Calu3 (cell line): ENCODE measurements at regions of chr3 and their contacts with region 1.

Region 1: GRCh38 chr3:58052373-58053273 is 44.4 kb downstream of the FLNB start:
- DNase-seq: peak; percentile 77
- H3K4me3 Mint-ChIP-seq: peak overlapping the region; percentile 36
- H3K27ac Mint-ChIP-seq: peak overlapping the region; percentile 99
- H3K4me1 Mint-ChIP-seq: peaks cover 61% of the 10 kb centered on the region
- H3K27me3 Mint-ChIP-seq: no peaks in the 10 kb centered on the region
- CTCF ChIP-seq: no peak

Region 2: DNA sequence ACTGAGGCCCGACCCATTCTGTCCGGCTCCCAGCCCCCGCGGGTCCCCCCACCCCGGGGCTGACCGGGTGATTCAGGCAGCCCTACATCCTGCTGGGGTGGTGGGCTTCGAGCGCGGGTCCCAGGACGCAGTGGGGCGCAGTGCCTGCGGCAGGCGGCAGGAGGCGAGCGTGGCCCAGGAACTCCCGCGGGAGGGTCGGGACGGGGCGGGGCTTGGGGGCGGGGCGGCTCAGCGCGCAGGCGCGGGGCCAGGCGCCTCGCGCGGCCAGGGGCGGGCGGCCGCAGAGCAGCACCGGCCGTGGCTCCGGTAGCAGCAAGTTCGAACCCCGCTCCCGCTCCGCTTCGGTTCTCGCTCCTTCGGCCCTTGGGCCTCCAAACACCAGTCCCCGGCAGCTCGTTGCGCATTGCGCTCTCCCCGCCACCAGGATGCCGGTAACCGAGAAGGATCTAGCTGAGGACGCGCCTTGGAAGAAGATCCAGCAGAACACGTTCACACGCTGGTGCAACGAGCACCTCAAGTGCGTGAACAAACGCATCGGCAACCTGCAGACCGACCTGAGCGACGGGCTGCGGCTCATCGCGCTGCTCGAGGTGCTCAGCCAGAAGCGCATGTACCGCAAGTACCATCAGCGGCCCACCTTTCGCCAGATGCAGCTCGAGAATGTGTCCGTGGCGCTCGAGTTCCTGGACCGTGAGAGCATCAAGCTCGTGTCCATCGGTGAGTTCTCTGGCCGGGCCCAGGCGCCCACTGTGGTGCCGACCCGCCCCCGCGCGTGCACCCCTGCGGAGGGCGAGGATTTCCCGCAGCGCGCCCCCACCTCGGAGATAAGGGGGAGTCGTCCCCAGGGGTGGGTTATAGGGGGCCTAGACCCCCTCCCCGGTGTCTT is 44.2 kb before region 1 on chr3 and contains the start of gene FLNB:
- CTCF ChIA-PET with region 1: interaction called, 11 read pairs
- intact Hi-C with region 1: loop called (anchors 1 kb)
- DNase-seq: peak; percentile 80
- H3K4me3 Mint-ChIP-seq: peak within 1 kb of the TSS; percentile 77
- H3K27ac Mint-ChIP-seq: peak within 1 kb of the TSS; percentile 33
- H3K4me1 Mint-ChIP-seq: peaks cover 36% of the 10 kb centered on the region
- H3K27me3 Mint-ChIP-seq: no peaks in the 10 kb centered on the region
- CTCF ChIP-seq: peak; percentile 50
- total RNA-seq, gene FLNB: 136 and 147 TPM in 2 replicates

Region 3: GRCh38 chr3:58093573-58094195 is 41.1 kb after region 1 on chr3:
- CTCF ChIA-PET with region 1: no interaction called
- intact Hi-C with region 1: loop called (anchors 5 kb)
- DNase-seq: peak; percentile 54
- H3K4me3 Mint-ChIP-seq: no peak overlapping the region
- H3K27ac Mint-ChIP-seq: no peak overlapping the region
- H3K4me1 Mint-ChIP-seq: peaks cover 14% of the 10 kb centered on the region
- H3K27me3 Mint-ChIP-seq: no peaks in the 10 kb centered on the region
- CTCF ChIP-seq: no peak